ENCODE measurements at regions of chr17 and their contacts with region 1.

Region 1: GRCh38 chr17:1648963-1649843 is 463 bp downstream of the RILP start:
- DNase-seq: peak; percentile 84 to 87
- H3K4me3 ChIP-seq: peak overlapping the region; percentile 82
- H3K4me3 Mint-ChIP-seq: peak overlapping the region; percentile 73
- H3K27ac Mint-ChIP-seq: peak overlapping the region; percentile 35
- H3K4me1 ChIP-seq: peaks cover 10% of the 10 kb centered on the region; the same call in 1 of the 2 replicates
- H3K4me1 Mint-ChIP-seq: peaks cover 6% of the 10 kb centered on the region
- H3K27me3 ChIP-seq: no peaks in the 10 kb centered on the region
- H3K27me3 Mint-ChIP-seq: no peaks in the 10 kb centered on the region
- CTCF ChIP-seq: peak; percentile 54 to 69

Region 2: DNA sequence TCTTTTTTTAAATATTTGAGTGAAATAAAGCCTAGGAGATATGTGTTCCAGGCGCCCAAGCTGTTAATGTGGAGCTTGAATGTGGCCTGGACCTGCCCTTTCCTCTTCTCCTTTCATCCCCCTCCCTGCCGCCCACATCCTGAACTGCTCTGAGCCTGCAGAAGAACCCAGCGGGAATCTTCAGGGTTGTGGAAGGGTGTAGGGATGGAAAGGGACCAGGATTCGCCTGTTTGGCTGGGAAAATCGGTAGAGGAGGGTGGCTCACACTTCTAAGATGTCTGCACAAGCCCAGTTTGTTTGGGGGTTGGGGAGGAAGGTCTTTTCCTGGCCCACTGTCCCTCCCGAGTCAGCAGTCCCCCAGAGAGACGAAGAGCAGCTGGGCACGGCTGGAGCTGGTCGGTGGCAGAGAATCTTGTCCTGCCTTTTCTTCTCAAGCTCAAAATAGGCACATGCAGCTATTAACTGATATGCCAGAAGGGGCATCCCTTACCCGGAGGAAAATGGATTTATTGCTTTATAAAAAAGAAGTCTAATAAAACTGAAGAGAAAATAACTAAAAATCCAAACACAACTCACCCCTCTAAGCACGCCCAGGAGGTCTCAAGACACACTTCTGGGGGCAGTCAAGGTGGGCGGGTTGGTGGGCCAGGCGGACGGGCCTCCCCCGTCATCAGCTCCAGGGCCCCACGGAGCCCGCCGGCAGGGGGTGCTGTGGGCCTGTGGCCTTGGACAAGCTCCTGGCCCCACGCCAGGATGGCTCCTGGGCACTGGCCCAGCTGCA is 75.1 kb before region 1 on chr17:
- CTCF ChIA-PET with region 1: interaction called, 14 read pairs
- POLR2A ChIA-PET with region 1: interaction called, 3 read pairs
- intact Hi-C with region 1: no loop called
- DNase-seq: peak; percentile 61 to 86
- H3K4me3 ChIP-seq: no peak overlapping the region
- H3K4me3 Mint-ChIP-seq: no peak overlapping the region
- H3K27ac Mint-ChIP-seq: no peak overlapping the region
- H3K4me1 ChIP-seq: no peaks in the 10 kb centered on the region
- H3K4me1 Mint-ChIP-seq: no peaks in the 10 kb centered on the region
- H3K27me3 ChIP-seq: no peaks in the 10 kb centered on the region
- H3K27me3 Mint-ChIP-seq: no peaks in the 10 kb centered on the region
- CTCF ChIP-seq: peak; percentile 82 to 83

Region 3: DNA sequence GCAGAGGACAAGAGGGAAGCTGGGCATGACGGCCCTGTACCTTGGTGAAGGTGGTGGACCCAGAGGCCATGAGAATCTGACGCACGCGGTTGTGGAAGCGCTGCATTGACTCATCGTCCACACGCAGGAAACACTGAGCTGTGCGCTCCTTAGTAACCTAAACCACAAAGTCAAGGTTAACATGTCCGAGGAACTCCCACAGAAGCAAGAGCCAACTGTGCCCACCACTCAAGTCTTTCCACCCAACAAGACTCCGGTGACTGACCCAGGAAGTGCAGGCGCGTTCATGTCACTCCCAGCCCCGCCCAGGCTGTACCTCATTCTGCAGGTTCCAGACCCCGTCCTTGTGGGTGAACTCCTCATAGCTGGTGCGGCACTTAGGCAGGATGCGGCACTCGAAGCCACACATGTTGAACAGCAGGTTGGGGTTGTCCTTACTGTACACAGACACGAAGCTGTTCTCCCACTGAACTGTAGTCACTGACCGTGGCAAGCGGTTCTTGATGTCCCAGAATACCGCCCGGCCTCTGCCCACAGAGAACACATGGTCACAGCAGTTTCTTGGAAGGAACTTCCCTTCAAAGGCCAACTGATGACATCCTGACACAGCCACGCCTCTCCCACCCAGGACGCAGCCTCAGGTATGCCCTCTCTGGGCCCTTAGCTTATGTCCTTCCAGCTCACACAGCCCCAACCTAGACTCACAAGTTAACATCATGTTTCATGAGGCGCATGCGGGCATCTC is 24.0 kb after region 1 on chr17:
- CTCF ChIA-PET with region 1: interaction called, 11 read pairs
- POLR2A ChIA-PET with region 1: interaction called, 6 read pairs
- intact Hi-C with region 1: no loop called
- DNase-seq: no peak
- H3K4me3 ChIP-seq: no peak overlapping the region
- H3K4me3 Mint-ChIP-seq: no peak overlapping the region
- H3K27ac Mint-ChIP-seq: no peak overlapping the region
- H3K4me1 ChIP-seq: no peaks in the 10 kb centered on the region
- H3K4me1 Mint-ChIP-seq: peaks cover 23% of the 10 kb centered on the region
- H3K27me3 ChIP-seq: no peaks in the 10 kb centered on the region
- H3K27me3 Mint-ChIP-seq: no peaks in the 10 kb centered on the region
- CTCF ChIP-seq: no peak

Measured in Caco-2 (cell line).